ENCODE measurements at regions of chrX and their contacts with region 1.

Region 1: DNA sequence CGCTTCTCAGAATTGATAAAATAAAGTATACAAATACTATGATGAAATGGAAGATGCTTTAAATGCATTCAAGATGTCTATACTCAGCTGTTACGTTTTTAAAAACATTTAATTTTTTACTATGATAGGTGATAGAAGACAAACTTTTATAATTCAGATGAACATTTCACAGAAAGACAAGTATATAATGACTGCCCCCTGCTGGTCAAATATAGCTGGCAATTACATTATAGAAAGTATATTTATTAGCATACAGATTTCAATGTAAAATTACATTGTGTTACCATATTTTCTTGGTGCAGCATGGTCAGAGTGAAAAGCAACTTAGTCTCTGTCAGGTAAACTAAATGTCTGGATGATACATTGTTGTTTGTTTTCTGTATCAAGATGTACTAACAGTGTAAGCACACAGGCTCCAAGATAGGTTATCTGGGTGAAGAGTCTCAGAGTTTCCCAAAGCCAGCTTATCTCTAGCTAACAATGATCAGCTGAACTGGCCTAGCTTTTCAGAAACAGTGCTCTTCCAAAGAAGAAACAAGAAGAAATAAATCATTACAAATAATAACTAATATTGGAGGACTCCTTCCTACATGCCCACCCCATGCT is 54.1 kb downstream of the SRPX start:
- H3K4me3 ChIP-seq: no peak overlapping the region
- H3K27ac ChIP-seq: no peak overlapping the region
- H3K4me1 ChIP-seq: no peaks in the 10 kb centered on the region
- CTCF ChIP-seq: no peak

Region 2: DNA sequence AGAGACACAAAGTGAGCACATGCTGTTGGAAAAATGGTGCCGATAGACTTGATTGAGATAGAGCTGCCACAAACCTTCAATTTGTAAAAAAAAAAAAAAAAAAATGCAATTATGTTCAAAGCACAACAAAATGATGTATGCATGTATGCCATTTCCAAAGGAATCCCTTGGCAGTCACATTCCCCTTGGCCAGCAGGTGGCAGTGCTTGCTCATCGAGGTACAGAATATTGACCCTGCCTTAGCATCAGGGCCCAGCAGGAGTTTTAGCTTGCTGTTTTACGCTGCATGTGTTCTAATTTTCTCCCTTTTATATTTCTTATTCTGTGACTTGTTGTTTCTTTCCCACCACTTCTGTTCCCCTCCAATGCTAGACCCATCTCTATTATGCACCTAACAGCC is 421.2 kb before region 1 on chrX:
- CTCF ChIA-PET with region 1: interaction called, 41 read pairs
- POLR2A ChIA-PET with region 1: no interaction called
- H3K4me3 ChIP-seq: no peak overlapping the region
- H3K27ac ChIP-seq: no peak overlapping the region
- H3K4me1 ChIP-seq: no peaks in the 10 kb centered on the region
- CTCF ChIP-seq: peak; percentile 59

Region 3: DNA sequence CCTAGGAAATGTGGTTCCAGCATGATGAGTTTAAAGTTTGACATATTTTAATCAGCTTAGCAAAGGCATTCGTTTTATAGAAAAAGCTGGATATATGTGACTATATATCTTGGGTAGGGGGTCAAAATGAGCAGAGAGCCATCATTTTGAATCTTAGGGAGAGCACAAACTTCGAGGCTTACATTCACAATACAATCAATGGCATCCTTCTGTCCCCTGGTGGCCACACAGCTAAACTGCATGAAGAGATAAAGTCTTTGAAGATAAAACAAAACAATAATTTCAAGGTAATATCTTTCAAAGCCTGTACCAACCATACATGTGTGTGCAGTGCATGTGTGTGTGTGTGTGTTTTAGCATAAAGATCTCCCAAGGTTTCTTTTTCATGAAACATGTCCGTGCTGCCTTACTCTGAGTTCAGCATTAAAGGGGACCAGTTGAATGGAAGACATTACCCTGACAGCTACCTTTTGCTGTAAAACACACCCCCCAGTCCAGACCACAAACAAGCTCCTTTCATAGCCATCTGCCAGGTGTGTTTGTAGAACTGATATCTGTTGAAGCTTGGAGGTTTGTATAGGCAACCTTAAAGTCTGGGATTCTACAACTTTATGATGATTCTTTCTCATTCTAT is 341.3 kb before region 1 on chrX:
- CTCF ChIA-PET with region 1: interaction called, 16 read pairs
- POLR2A ChIA-PET with region 1: no interaction called
- H3K4me3 ChIP-seq: no peak overlapping the region
- H3K27ac ChIP-seq: no peak overlapping the region
- H3K4me1 ChIP-seq: no peaks in the 10 kb centered on the region
- CTCF ChIP-seq: peak; percentile 44; the same call in 1 of the 2 replicates

Region 4: GRCh38 chrX:37905436-37906147 is 261.0 kb before region 1 on chrX:
- CTCF ChIA-PET with region 1: interaction called, 11 read pairs
- POLR2A ChIA-PET with region 1: no interaction called
- H3K4me3 ChIP-seq: peak overlapping the region; percentile 52
- H3K27ac ChIP-seq: peak overlapping the region; percentile 47; the same call in 1 of the 2 replicates
- H3K4me1 ChIP-seq: 0 out of 2 replicates have a peak, but pooled peaks cover 6% of the 10 kb centered on the region
- CTCF ChIP-seq: peak; percentile 83

Region 5: GRCh38 chrX:37926700-37927099 is 239.9 kb before region 1 on chrX:
- CTCF ChIA-PET with region 1: interaction called, 75 read pairs
- POLR2A ChIA-PET with region 1: no interaction called
- H3K4me3 ChIP-seq: no peak overlapping the region
- H3K27ac ChIP-seq: no peak overlapping the region
- H3K4me1 ChIP-seq: no peaks in the 10 kb centered on the region
- CTCF ChIP-seq: no peak

Region 6: GRCh38 chrX:37993837-37994619 is 172.6 kb before region 1 on chrX:
- CTCF ChIA-PET with region 1: interaction called, 10 read pairs
- POLR2A ChIA-PET with region 1: no interaction called
- H3K4me3 ChIP-seq: no peak overlapping the region
- H3K27ac ChIP-seq: no peak overlapping the region
- H3K4me1 ChIP-seq: no peaks in the 10 kb centered on the region
- CTCF ChIP-seq: no peak

Region 7: DNA sequence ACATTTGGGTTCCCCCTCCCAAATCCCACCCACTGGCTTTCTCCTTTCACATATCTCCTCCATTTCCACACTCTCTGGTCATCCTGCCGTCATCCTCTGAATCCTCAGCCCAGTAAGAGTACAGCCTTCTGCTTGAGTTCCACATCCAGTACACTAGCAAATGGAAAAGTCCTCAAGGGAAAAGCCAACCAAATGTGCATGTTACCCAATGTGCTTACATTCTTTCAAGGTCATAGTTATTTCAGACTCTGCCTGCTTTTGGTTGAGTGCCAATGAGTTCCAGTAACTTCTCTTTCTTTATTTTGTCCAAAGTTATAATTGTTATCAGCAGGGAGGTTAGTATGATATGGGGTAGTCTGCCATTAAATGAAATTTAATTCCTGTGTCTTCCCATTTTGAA is 24.0 kb before region 1 on chrX:
- CTCF ChIA-PET with region 1: interaction called, 13 read pairs
- POLR2A ChIA-PET with region 1: no interaction called
- H3K4me3 ChIP-seq: no peak overlapping the region
- H3K27ac ChIP-seq: no peak overlapping the region
- H3K4me1 ChIP-seq: no peaks in the 10 kb centered on the region
- CTCF ChIP-seq: no peak

Region 8: GRCh38 chrX:38249965-38250364 is 83.4 kb after region 1 on chrX:
- CTCF ChIA-PET with region 1: no interaction called
- POLR2A ChIA-PET with region 1: no interaction called
- H3K4me3 ChIP-seq: no peak overlapping the region
- H3K27ac ChIP-seq: no peak overlapping the region
- H3K4me1 ChIP-seq: peaks cover 3% of the 10 kb centered on the region; the same call in 1 of the 2 replicates
- CTCF ChIP-seq: no peak

Region 9: DNA sequence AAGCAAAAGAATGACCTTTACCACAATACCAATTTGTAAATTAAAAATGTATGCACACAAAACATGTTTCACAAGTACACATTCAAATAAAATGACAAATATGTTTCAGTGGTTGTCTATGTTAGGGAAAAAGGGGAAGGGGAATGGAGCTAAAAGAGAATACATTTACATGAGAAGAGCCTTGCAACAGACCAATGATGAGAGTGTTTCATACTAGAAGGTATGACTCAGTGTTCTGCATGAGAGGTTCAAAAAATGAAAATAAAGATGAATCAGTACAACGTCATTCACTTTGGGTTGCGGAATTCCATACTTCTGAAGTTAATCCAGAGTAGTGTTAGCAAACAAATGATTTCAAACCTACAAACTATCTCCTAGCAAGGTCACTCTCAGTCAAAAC is 109.0 kb after region 1 on chrX:
- CTCF ChIA-PET with region 1: no interaction called
- POLR2A ChIA-PET with region 1: no interaction called
- H3K4me3 ChIP-seq: no peak overlapping the region
- H3K27ac ChIP-seq: no peak overlapping the region
- H3K4me1 ChIP-seq: peaks cover 14% of the 10 kb centered on the region
- CTCF ChIP-seq: no peak